ENCODE measurements at regions of chr11 and their contacts with region 1.

Region 1: GRCh38 chr11:122628810-122629555 is 26.5 kb upstream of the UBASH3B start:
- DNase-seq: peak; percentile 82 to 86
- H3K4me3 ChIP-seq: no peak overlapping the region
- H3K4me3 Mint-ChIP-seq: no peak overlapping the region
- H3K27ac Mint-ChIP-seq: no peak overlapping the region
- H3K4me1 ChIP-seq: no peaks in the 10 kb centered on the region
- H3K4me1 Mint-ChIP-seq: peaks cover 7% of the 10 kb centered on the region
- H3K27me3 ChIP-seq: no peaks in the 10 kb centered on the region
- H3K27me3 Mint-ChIP-seq: peaks cover under 1% of the 10 kb centered on the region
- CTCF ChIP-seq: peak; percentile 92 to 98

Region 2: GRCh38 chr11:122578168-122578825 is 50.7 kb before region 1 on chr11:
- CTCF ChIA-PET with region 1: interaction called, 3 read pairs
- POLR2A ChIA-PET with region 1: no interaction called
- intact Hi-C with region 1: loop called (anchors 1 kb)
- DNase-seq: no peak
- H3K4me3 ChIP-seq: no peak overlapping the region
- H3K4me3 Mint-ChIP-seq: no peak overlapping the region
- H3K27ac Mint-ChIP-seq: no peak overlapping the region
- H3K4me1 ChIP-seq: no peaks in the 10 kb centered on the region
- H3K4me1 Mint-ChIP-seq: peaks cover 7% of the 10 kb centered on the region
- H3K27me3 ChIP-seq: no peaks in the 10 kb centered on the region
- H3K27me3 Mint-ChIP-seq: peaks cover 12% of the 10 kb centered on the region
- CTCF ChIP-seq: no peak

Region 3: DNA sequence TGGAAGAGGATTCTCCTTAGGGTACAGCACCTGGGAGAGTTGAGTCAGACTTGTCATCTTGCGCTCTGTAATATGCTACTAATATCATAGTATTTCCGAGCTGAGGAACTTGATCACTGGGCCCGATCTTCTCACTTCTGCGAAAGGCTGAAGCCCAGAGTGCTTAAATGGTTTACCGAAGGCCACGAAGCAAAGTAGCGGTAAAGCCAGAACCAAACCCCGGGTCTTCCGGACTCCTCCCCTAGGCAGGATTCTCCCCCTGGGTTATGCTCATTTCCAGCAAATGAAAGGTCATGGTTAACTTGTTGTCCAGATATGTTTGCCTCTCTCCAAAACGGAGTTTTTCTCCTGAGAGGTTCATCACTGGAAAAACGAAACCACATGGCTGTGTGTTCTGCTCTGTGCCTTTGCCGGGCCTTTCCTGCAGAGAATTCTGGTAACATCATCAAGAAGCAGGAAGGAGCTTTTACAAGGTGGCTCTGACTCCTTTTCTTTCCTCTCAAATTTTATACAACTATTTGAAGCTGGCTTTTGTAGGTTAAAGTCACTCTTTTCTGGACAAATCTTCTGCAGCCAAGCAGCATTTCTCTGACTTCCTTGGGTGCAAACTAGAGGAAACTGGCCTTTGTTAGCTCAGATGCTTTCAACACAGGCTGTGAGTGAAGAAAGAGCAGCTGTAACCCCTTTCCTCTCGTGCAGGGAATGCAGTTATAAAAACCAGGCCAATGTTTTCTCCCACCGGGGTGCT is 62.0 kb after region 1 on chr11:
- CTCF ChIA-PET with region 1: no interaction called
- POLR2A ChIA-PET with region 1: no interaction called
- intact Hi-C with region 1: no loop called
- DNase-seq: no peak
- H3K4me3 ChIP-seq: no peak overlapping the region
- H3K4me3 Mint-ChIP-seq: no peak overlapping the region
- H3K27ac Mint-ChIP-seq: no peak overlapping the region
- H3K4me1 ChIP-seq: peaks cover 11% of the 10 kb centered on the region; the same call in 1 of the 2 replicates
- H3K4me1 Mint-ChIP-seq: peaks cover 10% of the 10 kb centered on the region
- H3K27me3 ChIP-seq: no peaks in the 10 kb centered on the region
- H3K27me3 Mint-ChIP-seq: no peaks in the 10 kb centered on the region
- CTCF ChIP-seq: no peak

Region 4: DNA sequence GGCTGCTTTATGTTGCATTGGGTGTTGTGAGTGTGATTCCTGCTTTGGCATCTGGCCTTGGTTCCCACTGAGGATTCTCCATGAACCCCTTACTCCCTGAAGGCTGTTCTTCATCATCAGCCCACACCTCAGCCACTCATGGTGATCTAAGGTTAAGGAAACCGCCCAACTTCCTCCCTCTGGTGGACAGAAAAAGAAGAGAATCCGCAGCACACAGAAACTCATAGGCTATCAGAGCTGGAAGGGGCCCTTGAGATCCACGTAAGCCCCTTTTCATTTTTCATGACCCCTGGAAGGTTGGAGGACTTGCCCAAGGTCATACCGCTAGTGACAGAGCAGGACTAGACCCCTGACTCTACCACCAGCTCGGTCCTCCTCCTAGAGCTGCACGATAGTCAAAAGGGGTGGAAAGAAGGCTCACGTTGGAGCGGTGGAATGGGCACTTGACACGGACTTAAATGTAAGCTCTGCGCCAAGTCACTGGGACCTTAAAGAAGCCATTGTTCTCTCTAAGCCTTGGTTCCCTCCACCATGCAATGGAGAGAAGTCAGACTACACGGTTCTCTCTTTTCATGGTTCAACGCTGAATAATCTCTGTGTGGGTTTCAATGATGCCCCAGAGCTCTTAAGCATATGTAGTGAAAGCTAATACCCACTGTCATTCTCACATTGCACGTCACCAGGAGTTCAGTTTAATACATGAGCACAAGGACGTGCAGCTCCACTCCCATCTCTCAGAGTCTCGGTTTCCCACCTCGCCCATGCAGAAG is 125.8 kb after region 1 on chr11:
- CTCF ChIA-PET with region 1: interaction called, 37 read pairs
- POLR2A ChIA-PET with region 1: no interaction called
- intact Hi-C with region 1: loop called (anchors 1 kb)
- DNase-seq: peak in 1 of 2 experiments; percentile 65
- H3K4me3 ChIP-seq: no peak overlapping the region
- H3K4me3 Mint-ChIP-seq: no peak overlapping the region
- H3K27ac Mint-ChIP-seq: no peak overlapping the region
- H3K4me1 ChIP-seq: no peaks in the 10 kb centered on the region
- H3K4me1 Mint-ChIP-seq: no peaks in the 10 kb centered on the region
- H3K27me3 ChIP-seq: no peaks in the 10 kb centered on the region
- H3K27me3 Mint-ChIP-seq: no peaks in the 10 kb centered on the region
- CTCF ChIP-seq: peak; percentile 72 to 86

Region 5: DNA sequence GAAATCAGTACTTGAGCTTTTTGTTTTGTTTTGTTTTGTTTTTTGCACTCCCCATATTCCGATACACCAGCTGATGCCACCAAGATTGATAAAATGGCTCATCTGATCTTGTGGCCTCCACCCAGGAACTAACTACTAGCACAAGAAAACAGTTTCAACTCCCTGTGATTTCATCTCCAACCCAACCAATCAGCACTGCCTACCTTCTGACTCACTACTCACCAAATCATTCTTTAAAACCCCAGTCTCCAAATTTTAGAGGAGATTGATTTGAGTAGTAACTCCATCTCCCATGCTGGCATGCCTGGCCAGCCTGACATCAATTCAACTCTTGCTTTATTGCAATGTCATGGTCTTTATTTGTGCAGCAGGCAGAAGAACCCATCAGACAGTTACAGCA is 193.3 kb after region 1 on chr11:
- CTCF ChIA-PET with region 1: no interaction called
- POLR2A ChIA-PET with region 1: no interaction called
- intact Hi-C with region 1: no loop called
- DNase-seq: no peak
- H3K4me3 ChIP-seq: no peak overlapping the region
- H3K4me3 Mint-ChIP-seq: no peak overlapping the region
- H3K27ac Mint-ChIP-seq: no peak overlapping the region
- H3K4me1 ChIP-seq: no peaks in the 10 kb centered on the region
- H3K4me1 Mint-ChIP-seq: peaks cover 1% of the 10 kb centered on the region
- H3K27me3 ChIP-seq: no peaks in the 10 kb centered on the region
- H3K27me3 Mint-ChIP-seq: peaks cover 13% of the 10 kb centered on the region
- CTCF ChIP-seq: no peak

Region 6: GRCh38 chr11:122853971-122854446 is 225.0 kb after region 1 on chr11:
- CTCF ChIA-PET with region 1: interaction called, 21 read pairs
- POLR2A ChIA-PET with region 1: no interaction called
- intact Hi-C with region 1: loop called (anchors 1 kb)
- DNase-seq: peak; percentile 69 to 83
- H3K4me3 ChIP-seq: no peak overlapping the region
- H3K4me3 Mint-ChIP-seq: no peak overlapping the region
- H3K27ac Mint-ChIP-seq: no peak overlapping the region
- H3K4me1 ChIP-seq: peaks cover 13% of the 10 kb centered on the region
- H3K4me1 Mint-ChIP-seq: peaks cover 13% of the 10 kb centered on the region
- H3K27me3 ChIP-seq: no peaks in the 10 kb centered on the region; the same call in 1 of the 2 replicates
- H3K27me3 Mint-ChIP-seq: peaks cover 3% of the 10 kb centered on the region
- CTCF ChIP-seq: peak; percentile 79 to 80

Region 7: DNA sequence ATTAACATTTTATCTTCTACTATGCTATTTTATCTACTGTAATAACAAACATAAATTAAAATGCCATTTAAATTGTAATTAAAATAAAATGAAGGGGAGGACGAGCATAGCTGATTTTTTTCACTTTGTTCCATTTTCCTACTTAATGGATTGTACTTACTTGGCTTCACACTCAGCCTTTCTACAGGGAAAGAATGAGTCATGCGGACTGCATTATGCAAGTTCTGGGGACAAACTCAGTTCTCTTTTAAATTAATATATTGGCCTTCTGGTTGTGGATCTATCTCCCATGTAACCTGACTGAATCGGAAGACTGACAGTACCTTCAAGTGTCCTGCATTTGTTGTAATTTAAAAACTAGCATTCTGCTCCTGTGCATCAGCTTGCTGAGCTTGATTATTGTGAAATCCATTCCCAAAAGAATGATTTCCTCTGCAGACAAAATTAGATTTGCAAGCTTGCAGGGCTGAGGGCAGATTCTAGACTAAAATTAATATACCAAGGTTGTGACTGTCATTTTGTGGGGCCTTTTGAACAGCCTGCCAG is 1672.6 kb after region 1 on chr11:
- CTCF ChIA-PET with region 1: no interaction called
- POLR2A ChIA-PET with region 1: no interaction called
- intact Hi-C with region 1: loop called (anchors 5 kb)
- DNase-seq: no peak
- H3K4me3 ChIP-seq: no peak overlapping the region
- H3K4me3 Mint-ChIP-seq: no peak overlapping the region
- H3K27ac Mint-ChIP-seq: no peak overlapping the region
- H3K4me1 ChIP-seq: no peaks in the 10 kb centered on the region; the same call in 1 of the 2 replicates
- H3K4me1 Mint-ChIP-seq: no peaks in the 10 kb centered on the region
- H3K27me3 ChIP-seq: no peaks in the 10 kb centered on the region
- H3K27me3 Mint-ChIP-seq: peaks cover 17% of the 10 kb centered on the region
- CTCF ChIP-seq: no peak